MCF 10A (cell line): ENCODE measurements at regions of chr2 and their contacts with region 1.

Region 1: DNA sequence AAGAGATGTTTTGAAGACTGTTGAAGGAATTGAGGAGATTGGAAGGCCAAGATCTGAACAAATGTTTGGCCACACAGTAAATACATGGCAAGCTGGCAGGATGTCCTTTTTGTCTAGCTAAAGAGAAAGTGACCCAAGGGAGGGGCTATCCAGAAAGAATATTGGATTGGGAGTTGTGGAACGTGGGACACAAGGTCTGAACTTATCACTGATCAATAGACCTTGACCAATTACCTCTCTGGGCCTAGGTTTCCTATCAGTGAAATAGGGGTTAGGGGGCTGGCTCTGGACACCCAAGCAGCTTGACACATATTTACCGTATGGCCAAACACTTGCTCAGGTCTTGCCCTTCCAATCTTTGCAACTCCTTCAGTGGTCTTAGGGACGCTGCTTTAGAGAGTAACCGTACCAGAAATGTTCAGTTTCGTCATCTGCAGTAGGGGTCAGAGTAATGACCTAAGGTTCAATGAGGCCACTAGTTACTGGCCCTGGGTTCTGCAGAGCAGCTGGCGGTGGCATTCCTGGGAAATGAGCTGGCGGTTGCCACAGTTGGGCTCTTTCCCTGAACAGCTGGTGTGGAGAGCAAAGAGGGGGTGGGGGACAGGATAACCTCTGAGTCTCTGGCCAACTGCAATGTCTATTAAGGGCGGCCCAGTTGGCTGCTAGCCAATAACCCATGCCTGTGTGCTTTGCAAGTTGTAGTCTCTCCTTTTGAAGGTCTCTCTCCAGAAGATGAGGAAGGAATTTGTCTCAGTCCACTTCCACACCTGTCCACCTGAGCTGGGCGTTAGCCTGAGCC is 70.2 kb upstream of the STPG4 start:
- DNase-seq: peak; percentile 86
- H3K4me3 Mint-ChIP-seq: no peak overlapping the region
- H3K27ac Mint-ChIP-seq: no peak overlapping the region
- H3K4me1 Mint-ChIP-seq: peaks cover 22% of the 10 kb centered on the region
- H3K27me3 Mint-ChIP-seq: no peaks in the 10 kb centered on the region
- CTCF ChIP-seq: no peak

Region 2: DNA sequence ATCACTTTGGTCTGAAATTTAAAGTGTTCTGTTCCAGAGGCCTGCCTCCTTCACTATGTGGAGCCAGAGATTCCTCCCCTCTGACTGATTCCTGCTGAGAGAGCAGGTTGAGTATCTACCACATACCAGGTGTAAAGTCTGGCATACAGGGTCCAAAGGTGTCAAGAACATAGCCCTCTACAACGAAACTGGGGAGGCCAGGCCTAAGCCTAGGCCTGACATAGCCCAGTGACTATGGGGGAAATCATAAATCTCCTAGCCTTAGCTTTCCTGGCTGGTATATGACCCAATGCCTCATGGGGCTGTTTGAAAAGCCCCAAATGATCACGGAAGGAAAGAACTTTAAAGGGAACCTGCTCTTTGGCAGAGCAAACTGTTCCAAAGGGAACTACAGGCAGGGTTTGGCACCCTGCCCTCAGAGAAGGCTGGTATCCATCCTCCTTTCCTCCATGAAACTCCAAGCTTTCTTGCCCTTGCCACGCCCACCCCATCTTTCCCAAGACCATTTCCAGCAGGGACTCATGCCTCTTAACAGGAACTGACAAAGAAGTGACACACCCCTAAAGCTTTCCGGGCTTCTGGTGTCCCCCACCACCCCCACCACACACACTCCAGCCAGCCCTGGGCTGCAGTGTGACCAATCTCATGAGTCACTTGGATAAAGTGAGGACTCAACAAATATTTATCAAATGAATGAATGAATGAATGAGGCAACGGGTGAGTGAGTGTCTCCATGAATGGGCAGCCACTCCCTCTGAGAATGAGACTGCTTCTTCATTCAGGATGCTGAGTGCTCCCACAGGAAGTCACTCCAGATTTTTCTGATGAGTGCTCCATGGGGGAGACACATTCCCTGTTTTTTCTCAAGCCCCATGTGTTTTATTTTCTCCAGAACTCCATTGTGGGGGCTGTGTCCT is 44.3 kb after region 1 on chr2:
- CTCF ChIA-PET with region 1: interaction called, 4 read pairs
- POLR2A ChIA-PET with region 1: no interaction called
- intact Hi-C with region 1: loop called (anchors 5 kb)
- DNase-seq: peak; percentile 99
- H3K4me3 Mint-ChIP-seq: no peak overlapping the region
- H3K27ac Mint-ChIP-seq: peak overlapping the region; percentile 5
- H3K4me1 Mint-ChIP-seq: peaks cover 33% of the 10 kb centered on the region
- H3K27me3 Mint-ChIP-seq: no peaks in the 10 kb centered on the region
- CTCF ChIP-seq: no peak

Region 3: GRCh38 chr2:47315475-47315874 is 90.2 kb after region 1 on chr2:
- CTCF ChIA-PET with region 1: no interaction called
- POLR2A ChIA-PET with region 1: no interaction called
- intact Hi-C with region 1: no loop called
- DNase-seq: no peak
- H3K4me3 Mint-ChIP-seq: no peak overlapping the region
- H3K27ac Mint-ChIP-seq: no peak overlapping the region
- H3K4me1 Mint-ChIP-seq: peaks cover 12% of the 10 kb centered on the region
- H3K27me3 Mint-ChIP-seq: no peaks in the 10 kb centered on the region
- CTCF ChIP-seq: no peak